ENCODE measurements at regions of chr21 and their contacts with region 1.

Region 1: GRCh38 chr21:34008618-34009017 is 64.8 kb upstream of the MRPS6 start:
- DNase-seq: no peak
- H3K4me3 Mint-ChIP-seq: no peak overlapping the region
- H3K27ac Mint-ChIP-seq: no peak overlapping the region
- H3K4me1 Mint-ChIP-seq: peaks cover 14% of the 10 kb centered on the region
- H3K27me3 Mint-ChIP-seq: no peaks in the 10 kb centered on the region

Region 2: GRCh38 chr21:34020005-34020847 is 11.6 kb after region 1 on chr21:
- intact Hi-C with region 1: loop called (anchors 2 kb)
- DNase-seq: no peak
- H3K4me3 Mint-ChIP-seq: peak overlapping the region; percentile 41
- H3K27ac Mint-ChIP-seq: peak overlapping the region; percentile 34
- H3K4me1 Mint-ChIP-seq: peaks cover 30% of the 10 kb centered on the region
- H3K27me3 Mint-ChIP-seq: no peaks in the 10 kb centered on the region

Region 3: DNA sequence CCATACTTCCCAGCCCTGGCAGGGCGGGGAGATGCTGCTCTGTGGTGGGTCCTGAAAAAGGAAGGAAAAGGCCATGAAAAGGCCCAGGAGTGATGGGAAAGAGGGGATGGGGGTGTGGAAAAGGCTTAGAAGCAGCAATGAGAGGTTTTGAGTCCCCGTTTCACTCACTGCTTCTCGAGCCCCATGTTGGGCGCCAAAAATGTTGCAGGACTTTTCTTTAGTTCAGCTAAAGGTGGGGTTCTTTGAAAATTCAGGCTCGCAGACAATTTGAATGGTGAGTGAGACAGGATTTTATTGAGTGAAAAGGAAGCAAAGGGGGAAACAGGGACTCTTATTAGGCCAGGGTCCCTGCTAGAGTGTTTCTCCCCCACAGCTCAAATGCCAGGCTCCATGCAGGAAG is 157.8 kb after region 1 on chr21:
- intact Hi-C with region 1: no loop called
- DNase-seq: peak; percentile 67
- H3K4me3 Mint-ChIP-seq: no peak overlapping the region
- H3K27ac Mint-ChIP-seq: no peak overlapping the region
- H3K4me1 Mint-ChIP-seq: no peaks in the 10 kb centered on the region
- H3K27me3 Mint-ChIP-seq: no peaks in the 10 kb centered on the region

Region 4: DNA sequence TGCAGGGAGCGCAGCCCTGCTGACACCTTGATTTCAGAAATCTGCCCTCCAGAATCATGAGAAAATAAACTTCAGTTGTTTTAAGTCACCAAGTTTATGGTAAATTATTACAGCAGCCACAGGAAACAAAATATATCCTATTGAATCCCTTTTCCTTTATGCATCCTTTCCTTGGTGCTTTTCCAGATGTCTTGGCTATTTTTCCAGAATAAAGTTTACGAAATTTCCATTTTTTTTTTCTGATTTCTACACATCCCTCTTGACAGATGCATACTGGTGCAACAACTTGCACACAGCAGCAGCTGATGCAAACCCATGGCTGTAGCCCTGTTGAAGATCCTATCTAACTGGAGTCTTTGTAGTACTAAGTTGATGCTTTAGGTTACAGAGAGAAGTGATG is 244.1 kb after region 1 on chr21:
- intact Hi-C with region 1: no loop called
- DNase-seq: no peak
- H3K4me3 Mint-ChIP-seq: no peak overlapping the region
- H3K27ac Mint-ChIP-seq: no peak overlapping the region
- H3K4me1 Mint-ChIP-seq: no peaks in the 10 kb centered on the region
- H3K27me3 Mint-ChIP-seq: peaks cover 14% of the 10 kb centered on the region